ENCODE measurements at regions of chr17 and their contacts with region 1.

Region 1: DNA sequence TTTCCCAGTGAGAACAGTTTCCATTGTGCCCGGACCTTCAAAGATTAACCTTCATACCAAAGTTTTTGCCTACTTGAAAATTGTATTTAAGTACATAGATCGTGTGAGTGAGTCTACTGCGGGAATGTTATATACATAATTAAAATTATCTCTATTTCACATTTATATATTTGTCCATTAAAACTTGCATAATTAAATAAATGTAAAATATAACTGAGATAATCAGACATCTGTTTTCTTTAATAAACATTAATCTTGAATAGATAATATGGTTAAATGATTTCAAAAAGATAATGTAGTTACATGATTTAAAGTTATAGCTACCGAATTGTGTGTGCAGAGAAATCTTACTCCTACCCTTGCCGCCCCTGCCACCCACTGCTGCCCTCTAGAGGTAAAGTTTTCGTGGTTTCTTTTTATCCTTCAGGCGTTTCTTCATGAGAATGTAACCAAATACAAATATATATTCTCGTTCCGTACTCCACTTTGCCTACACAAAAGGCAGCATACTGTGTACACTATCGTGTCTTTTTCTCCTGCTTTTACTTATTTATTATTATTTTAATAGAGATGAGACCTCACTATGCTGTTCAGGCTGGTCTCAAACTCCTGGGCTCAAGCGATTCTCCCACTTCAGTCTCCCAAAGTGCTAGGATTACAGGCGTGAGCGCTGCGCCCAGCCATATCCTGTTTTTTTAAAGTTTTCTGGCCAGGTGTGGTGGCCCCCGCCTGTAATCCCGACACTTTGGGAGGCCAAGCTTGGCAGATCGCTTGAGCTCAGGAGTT is 35.6 kb downstream of the RPA1 start:
- DNase-seq: peak; percentile 51 to 72
- ATAC-seq: peak; percentile 54 to 84; a peak in 5 of 6 replicates
- H3K4me3 ChIP-seq: no peak overlapping the region
- H3K27ac ChIP-seq: no peak overlapping the region
- H3K4me1 ChIP-seq: no peaks in the 10 kb centered on the region
- CTCF ChIP-seq: peak; percentile 91
- EP300 ChIP-seq: no peak
- POLR2A ChIP-seq: no peak
- RAD21 ChIP-seq: peak; percentile 67 to 71

Region 2: GRCh38 chr17:1820528-1821252 is 44.8 kb before region 1 on chr17:
- CTCF ChIA-PET with region 1: no interaction called
- POLR2A ChIA-PET with region 1: no interaction called
- DNase-seq: no peak
- ATAC-seq: no peak
- H3K4me3 ChIP-seq: no peak overlapping the region
- H3K27ac ChIP-seq: no peak overlapping the region
- H3K4me1 ChIP-seq: no peaks in the 10 kb centered on the region; the same call in 2 of the 3 replicates
- CTCF ChIP-seq: no peak
- EP300 ChIP-seq: no peak
- POLR2A ChIP-seq: no peak
- RAD21 ChIP-seq: no peak

Region 3: DNA sequence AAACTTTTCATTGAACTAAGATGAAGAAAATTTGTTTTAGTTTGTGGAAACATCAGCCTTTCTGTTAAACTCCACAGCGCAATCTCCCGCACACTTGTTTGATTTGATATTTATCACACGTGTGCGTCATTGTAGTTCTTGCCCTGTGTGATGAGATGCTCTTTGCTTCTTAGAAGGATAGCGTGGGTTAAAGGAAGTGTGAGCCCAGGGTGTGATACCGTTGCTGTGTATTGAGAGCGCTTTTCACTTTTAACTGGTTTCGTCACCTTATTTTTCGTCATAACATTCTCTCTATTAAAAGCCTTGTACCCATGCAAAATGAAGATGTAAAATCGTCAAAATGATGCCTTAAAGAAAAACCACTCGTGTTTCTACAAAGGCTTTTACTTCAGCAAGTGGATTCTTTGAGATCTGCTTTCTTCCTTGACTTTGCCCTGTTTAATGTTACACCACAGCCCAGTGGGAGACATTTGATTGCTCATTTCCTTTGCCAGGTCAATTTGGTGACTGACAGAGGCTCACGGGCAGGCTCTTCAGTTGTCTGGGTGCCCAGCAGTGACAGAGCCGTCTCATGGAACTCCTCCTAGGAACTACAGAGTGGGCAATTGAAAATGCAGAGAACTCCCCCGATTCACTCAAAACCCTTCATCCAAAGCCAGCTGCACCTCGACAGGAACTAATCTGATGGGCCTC is 25.5 kb after region 1 on chr17:
- CTCF ChIA-PET with region 1: interaction called, 12 read pairs
- POLR2A ChIA-PET with region 1: no interaction called
- DNase-seq: no peak
- ATAC-seq: no peak
- H3K4me3 ChIP-seq: no peak overlapping the region
- H3K27ac ChIP-seq: no peak overlapping the region
- H3K4me1 ChIP-seq: no peaks in the 10 kb centered on the region
- CTCF ChIP-seq: no peak
- EP300 ChIP-seq: no peak
- POLR2A ChIP-seq: no peak
- RAD21 ChIP-seq: no peak

Region 4: GRCh38 chr17:2613089-2613808 is 747.8 kb after region 1 on chr17:
- CTCF ChIA-PET with region 1: no interaction called
- POLR2A ChIA-PET with region 1: no interaction called
- DNase-seq: no peak
- ATAC-seq: peak in 1 of 2 experiments; percentile 19; a peak in 1 of 6 replicates
- H3K4me3 ChIP-seq: no peak overlapping the region
- H3K27ac ChIP-seq: no peak overlapping the region
- H3K4me1 ChIP-seq: peaks cover 6% of the 10 kb centered on the region
- CTCF ChIP-seq: no peak
- EP300 ChIP-seq: no peak
- POLR2A ChIP-seq: no peak
- RAD21 ChIP-seq: no peak